ENCODE measurements at regions of chr16 and their contacts with region 1.

Region 1: GRCh38 chr16:74774203-74775116 is at the start of gene FA2H:
- DNase-seq: peak; percentile 70 to 95 (median 88)
- H3K4me3 ChIP-seq: peak within 1 kb of the TSS; percentile 26 to 92 (median 70)
- H3K27ac ChIP-seq: peak within 1 kb of the TSS; percentile 40 to 99 (median 94)
- H3K27me3 ChIP-seq: peaks cover 0 to 21% (median 3%) of the 10 kb centered on the region in 45 donors
- CTCF ChIP-seq: peak in 53 of 56 donors; percentile 8 to 77 (median 57)
- total RNA-seq, gene FA2H: 7.4 to 185 (median 44.7) TPM

Region 2: GRCh38 chr16:74726716-74727115 is 47.7 kb before region 1 on chr16:
- intact Hi-C with region 1: loop called (anchors 1 to 2 kb)
- DNase-seq: no peak
- H3K4me3 ChIP-seq: no peak overlapping the region
- H3K27ac ChIP-seq: peak overlapping the region in 56 of 59 donors; percentile 40 to 100 (median 98)
- H3K27me3 ChIP-seq: no peaks in the 10 kb centered on the region
- CTCF ChIP-seq: peak in 14 of 56 donors; percentile 9 to 32 (median 18)

Region 3: DNA sequence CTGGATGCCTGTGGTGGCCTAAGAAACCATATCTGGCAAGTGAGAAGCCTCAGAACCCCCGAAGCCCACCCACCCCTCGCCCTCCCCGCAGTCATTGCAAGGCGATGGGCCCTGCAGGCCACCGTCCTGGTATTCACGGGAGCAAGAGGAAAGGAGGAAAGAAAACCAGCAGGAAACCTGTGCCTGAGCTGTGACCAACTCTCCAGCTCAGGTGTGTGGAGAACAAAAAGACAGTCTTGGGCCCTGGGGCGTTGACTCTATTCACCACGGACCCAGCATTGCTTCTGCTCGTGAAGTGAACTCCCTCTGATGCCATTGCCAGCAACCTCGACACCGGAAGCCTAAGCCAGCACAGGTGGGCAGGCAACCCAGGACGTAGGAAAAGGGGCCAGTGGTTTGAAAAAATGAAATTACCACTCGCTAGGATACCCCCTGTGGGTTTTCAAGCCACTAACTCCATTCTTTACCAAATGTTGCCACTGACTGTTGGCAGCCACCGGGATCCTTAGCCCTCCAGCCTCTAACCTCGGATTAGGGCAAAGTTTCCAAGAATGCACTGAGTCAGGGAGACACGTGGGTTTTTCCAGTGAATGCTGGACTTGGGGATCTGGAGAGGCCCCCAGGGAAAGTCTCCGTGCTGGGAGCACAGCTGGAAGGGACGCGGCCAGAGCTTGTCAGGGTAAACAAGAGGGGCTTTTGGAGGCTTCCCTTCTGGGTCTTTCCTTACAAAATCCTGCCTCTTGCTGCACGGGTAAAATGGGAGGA is 25.0 kb before region 1 on chr16:
- intact Hi-C with region 1: loop called in 1 of 2 experiments (anchors 1 kb)
- DNase-seq: no peak
- H3K4me3 ChIP-seq: peak overlapping the region in 10 of 59 donors; percentile 3 to 34 (median 12)
- H3K27ac ChIP-seq: peak overlapping the region; percentile 79 to 100 (median 97)
- H3K27me3 ChIP-seq: peaks cover 0 to 10% (median 0%) of the 10 kb centered on the region in 45 donors
- CTCF ChIP-seq: no peak

Region 4: GRCh38 chr16:74813109-74813641 is 38.7 kb after region 1 on chr16:
- intact Hi-C with region 1: loop called in 1 of 2 experiments (anchors 2 kb)
- DNase-seq: peak; percentile 58 to 84 (median 78)
- H3K4me3 ChIP-seq: peak overlapping the region in 2 of 59 donors; percentile 10 to 23
- H3K27ac ChIP-seq: peak overlapping the region in 55 of 59 donors; percentile 4 to 90 (median 71)
- H3K27me3 ChIP-seq: no peaks in the 10 kb centered on the region
- CTCF ChIP-seq: peak; percentile 45 to 100 (median 95)

Measured in dorsolateral prefrontal cortex (tissue), 120 donors.